OCI-LY7 (cell line): ENCODE measurements at regions of chr21 and their contacts with region 1.

Region 1: GRCh38 chr21:29125191-29125590 is 5.3 kb upstream of the MAP3K7CL start:
- DNase-seq: peak; percentile 56
- H3K4me3 ChIP-seq: peak overlapping the region; percentile 29
- H3K27ac ChIP-seq: peak overlapping the region; percentile 29
- H3K4me1 ChIP-seq: peaks cover 31% of the 10 kb centered on the region
- CTCF ChIP-seq: 0 out of 2 replicates have a peak, but pooled peaks have one; percentile 9

Region 2: DNA sequence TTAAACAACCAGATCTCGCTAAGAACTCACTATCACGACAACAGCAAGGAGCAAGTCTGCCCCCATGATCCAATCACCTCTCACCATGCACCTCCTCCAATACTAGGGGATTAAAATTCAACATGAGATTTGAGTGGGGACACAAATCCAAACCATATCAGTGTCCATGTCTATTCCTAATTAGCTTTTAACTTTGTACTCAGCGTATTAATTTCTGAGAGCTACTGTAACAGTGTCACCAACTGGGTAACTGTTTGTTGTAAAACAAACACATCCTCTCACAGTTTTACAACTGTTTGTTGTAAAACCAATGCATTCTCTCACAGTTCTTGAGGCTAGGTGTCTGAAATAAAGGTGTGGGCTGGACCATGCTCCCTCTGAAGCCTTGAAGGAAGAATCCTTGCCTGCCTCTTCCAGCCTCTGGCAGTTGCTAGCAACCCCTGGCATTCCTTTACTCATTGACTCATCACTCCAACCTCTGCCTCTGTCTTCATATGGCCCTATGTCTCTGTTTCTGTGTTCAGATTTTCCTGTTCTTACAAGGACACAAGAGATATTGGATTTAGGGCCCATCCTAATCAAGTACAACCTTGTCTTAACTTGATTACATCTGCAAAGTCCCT is 253.7 kb before region 1 on chr21:
- CTCF ChIA-PET with region 1: no interaction called
- POLR2A ChIA-PET with region 1: no interaction called
- intact Hi-C with region 1: no loop called
- DNase-seq: no peak
- H3K4me3 ChIP-seq: no peak overlapping the region
- H3K27ac ChIP-seq: no peak overlapping the region
- H3K4me1 ChIP-seq: no peaks in the 10 kb centered on the region
- CTCF ChIP-seq: no peak

Region 3: DNA sequence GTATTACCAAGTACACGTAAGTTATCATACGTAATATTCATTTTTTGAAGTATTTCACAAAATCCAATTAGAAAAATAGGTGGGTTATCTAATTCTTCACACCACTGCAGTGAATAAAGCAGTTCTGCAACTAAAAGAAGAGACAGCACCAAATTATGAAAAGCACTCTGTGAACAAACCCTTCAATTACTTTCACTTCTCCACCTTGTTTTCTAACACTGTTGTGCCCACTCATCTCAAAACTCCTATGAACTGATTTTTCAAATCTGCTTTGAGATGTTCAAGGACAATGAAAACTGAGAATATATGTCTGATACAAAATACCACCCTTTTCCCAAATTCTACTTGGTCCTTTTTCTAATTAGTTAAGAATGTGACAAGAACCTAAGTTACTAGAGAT is 171.9 kb before region 1 on chr21:
- CTCF ChIA-PET with region 1: no interaction called
- POLR2A ChIA-PET with region 1: no interaction called
- intact Hi-C with region 1: no loop called
- DNase-seq: no peak
- H3K4me3 ChIP-seq: no peak overlapping the region
- H3K27ac ChIP-seq: no peak overlapping the region
- H3K4me1 ChIP-seq: no peaks in the 10 kb centered on the region
- CTCF ChIP-seq: no peak

Region 4: DNA sequence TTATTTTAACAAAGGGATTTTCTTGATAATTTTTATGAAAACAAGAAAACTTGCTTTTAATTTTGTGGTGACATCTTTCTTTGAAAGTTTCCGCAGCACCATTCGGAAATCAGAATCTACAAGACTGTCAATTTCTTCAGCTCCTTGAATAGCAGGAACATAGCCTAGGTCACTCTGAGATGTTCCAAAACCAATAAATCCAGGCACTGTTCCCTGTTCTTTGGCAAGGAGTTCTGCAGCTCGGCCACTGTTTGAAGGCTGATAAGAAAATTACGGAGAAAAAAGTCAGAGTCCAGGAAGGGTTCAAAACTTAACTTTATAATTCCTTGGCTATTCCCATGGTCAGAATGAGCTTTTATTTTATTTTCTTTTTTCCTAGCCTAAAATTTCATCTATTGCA is 138.5 kb before region 1 on chr21:
- CTCF ChIA-PET with region 1: no interaction called
- POLR2A ChIA-PET with region 1: no interaction called
- intact Hi-C with region 1: no loop called
- DNase-seq: no peak
- H3K4me3 ChIP-seq: no peak overlapping the region
- H3K27ac ChIP-seq: no peak overlapping the region
- H3K4me1 ChIP-seq: peaks cover 15% of the 10 kb centered on the region
- CTCF ChIP-seq: no peak

Region 5: GRCh38 chr21:29104239-29104708 is 20.9 kb before region 1 on chr21:
- CTCF ChIA-PET with region 1: no interaction called
- POLR2A ChIA-PET with region 1: interaction called, 10 read pairs
- intact Hi-C with region 1: no loop called
- DNase-seq: no peak
- H3K4me3 ChIP-seq: no peak overlapping the region
- H3K27ac ChIP-seq: no peak overlapping the region
- H3K4me1 ChIP-seq: no peaks in the 10 kb centered on the region
- CTCF ChIP-seq: no peak